ENCODE measurements at regions of chr17 and their contacts with region 1.

Region 1: DNA sequence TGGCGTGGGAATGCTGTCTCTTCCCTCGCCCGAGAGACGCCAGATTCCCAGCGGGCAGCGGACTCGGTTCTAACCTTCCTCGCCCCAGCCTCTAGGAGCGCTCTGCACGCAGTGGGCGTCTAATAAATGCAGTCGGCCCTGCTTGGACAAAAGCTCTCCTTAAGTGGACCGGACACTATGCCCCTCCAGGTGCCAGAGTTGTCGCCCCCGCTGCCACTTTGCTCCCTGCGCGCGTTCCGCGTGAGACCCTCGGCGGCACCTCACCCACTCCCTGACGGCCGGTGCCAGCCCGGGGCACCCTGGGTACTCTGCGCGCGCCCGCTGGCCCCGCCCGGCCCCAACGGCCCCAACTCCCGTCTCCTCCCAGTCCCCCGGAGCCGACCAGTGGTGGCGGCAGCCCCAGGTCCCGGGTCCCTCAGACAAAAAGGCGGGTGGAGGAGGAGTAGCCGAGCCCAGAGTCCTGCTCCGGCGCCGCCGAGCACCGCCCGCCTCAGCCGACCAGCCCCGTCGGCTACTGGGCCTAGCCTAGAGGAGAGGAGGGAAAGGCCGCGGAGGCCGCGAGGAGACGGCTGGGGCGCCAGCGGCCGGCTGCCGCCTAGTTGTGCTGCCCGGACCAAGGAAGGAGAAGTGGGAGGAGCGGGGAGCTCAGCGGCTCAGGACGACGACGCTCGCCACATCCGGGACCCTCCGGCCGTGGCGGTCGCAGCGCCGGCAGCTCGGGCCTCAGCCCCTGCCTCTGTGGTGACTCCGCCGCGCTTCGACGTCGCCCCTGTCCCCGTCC is 123.0 kb downstream of the GOSR1 start:
- DNase-seq: peak; percentile 73
- H3K4me3 Mint-ChIP-seq: peak overlapping the region; percentile 97
- H3K27ac Mint-ChIP-seq: no peak overlapping the region
- H3K4me1 Mint-ChIP-seq: peaks cover 16% of the 10 kb centered on the region
- H3K27me3 Mint-ChIP-seq: peaks cover 2% of the 10 kb centered on the region

Region 2: GRCh38 chr17:30477083-30477773 is 123.0 kb before region 1 on chr17 and contains the start of gene GOSR1:
- CTCF ChIA-PET with region 1: no interaction called
- intact Hi-C with region 1: loop called (anchors 10 kb)
- DNase-seq: peak; percentile 97
- H3K4me3 Mint-ChIP-seq: peak within 1 kb of the TSS; percentile 98
- H3K27ac Mint-ChIP-seq: peak within 1 kb of the TSS; percentile 97
- H3K4me1 Mint-ChIP-seq: peaks cover 36% of the 10 kb centered on the region
- H3K27me3 Mint-ChIP-seq: peaks cover 2% of the 10 kb centered on the region
- total RNA-seq, gene GOSR1: 33.9 to 37.3 TPM

Region 3: DNA sequence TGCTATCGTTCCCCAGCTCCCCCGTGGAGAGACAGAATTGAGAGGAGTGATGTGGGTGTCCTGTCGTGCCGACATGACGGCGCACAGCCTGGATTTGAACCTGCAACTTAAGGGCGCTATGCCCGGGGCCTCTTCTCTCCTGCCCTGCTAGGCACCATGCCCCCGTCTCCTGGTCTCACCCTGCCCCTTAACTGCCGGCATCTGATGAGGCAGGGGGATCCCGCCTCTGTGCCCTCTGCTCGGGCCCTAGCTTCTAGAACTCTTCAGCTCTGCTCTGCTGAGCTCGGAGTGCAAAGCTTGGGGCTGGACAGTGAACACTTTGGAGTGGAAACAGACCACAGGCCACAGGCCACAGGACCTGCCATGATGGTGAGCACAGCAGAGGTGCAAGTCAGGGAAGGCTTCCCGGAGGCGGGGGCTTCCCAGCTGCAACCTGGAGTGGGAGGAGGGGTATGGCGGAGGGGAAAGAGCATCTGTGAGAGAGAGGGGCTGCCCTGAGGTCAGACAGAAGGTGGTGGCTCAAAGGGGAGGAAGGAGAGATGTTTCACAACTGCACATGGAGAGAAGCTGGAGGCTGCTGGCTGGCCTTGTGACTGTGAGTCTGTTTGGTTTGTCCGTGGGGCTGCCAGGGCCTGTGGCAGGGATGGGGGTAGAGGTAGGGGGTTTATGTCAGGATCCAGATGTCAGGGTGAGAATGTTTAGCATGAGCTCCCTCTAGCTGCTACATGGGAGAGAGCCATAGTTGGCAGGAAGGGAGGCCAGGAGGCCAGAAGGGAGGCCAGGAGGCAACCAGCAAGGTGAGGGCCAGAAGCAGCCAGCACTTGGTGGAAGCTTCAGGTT is 116.4 kb after region 1 on chr17:
- CTCF ChIA-PET with region 1: interaction called, 3 read pairs
- intact Hi-C with region 1: loop called (anchors 10 kb)
- DNase-seq: peak; percentile 36
- H3K4me3 Mint-ChIP-seq: no peak overlapping the region
- H3K27ac Mint-ChIP-seq: no peak overlapping the region
- H3K4me1 Mint-ChIP-seq: peaks cover 11% of the 10 kb centered on the region
- H3K27me3 Mint-ChIP-seq: no peaks in the 10 kb centered on the region

Region 4: GRCh38 chr17:30780343-30780742 is 180.1 kb after region 1 on chr17:
- CTCF ChIA-PET with region 1: no interaction called
- intact Hi-C with region 1: no loop called
- DNase-seq: peak; percentile 57
- H3K4me3 Mint-ChIP-seq: no peak overlapping the region
- H3K27ac Mint-ChIP-seq: peak overlapping the region; percentile 80
- H3K4me1 Mint-ChIP-seq: peaks cover 18% of the 10 kb centered on the region
- H3K27me3 Mint-ChIP-seq: no peaks in the 10 kb centered on the region

Region 5: DNA sequence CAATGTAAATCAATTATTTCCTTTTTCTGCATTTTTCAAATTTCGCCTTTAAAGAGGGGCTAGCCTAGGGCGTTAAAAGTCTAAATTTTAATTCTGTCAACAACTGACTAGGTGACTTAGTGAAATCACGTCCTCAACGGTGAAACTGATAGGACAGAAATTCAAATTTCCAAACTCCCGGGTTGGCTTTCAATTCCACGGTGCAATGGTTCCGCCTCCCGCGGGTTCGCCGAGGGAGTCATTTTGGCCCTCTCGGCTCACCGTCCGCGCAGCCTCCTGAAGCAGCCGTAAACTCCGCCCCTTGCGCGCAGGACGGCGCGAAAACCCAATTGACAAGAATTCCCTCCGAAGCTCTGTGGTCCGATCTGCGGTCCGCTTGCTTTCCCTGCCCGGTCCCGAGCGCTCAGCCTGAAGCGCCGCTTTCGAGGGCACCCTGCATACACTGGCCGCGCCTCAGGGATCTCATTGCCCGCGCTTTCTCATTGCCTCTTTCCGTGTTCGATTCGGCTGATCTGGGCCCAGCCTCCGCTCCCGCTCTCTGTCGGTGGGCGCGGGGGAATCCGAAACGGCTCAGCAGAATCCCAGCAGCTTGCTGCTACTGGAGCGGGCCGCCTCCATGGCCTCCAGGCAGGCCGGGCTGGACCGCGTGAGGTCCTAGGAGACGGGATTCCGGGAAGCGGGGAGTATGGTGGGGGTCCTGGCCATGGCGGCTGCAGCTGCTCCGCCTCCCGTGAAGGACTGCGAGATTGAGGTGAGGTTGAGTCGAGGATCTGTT is 231.6 kb after region 1 on chr17 and contains the start of gene ATAD5:
- CTCF ChIA-PET with region 1: no interaction called
- intact Hi-C with region 1: loop called (anchors 2 kb)
- DNase-seq: peak; percentile 93
- H3K4me3 Mint-ChIP-seq: peak within 1 kb of the TSS; percentile 97
- H3K27ac Mint-ChIP-seq: peak within 1 kb of the TSS; percentile 90
- H3K4me1 Mint-ChIP-seq: peaks cover 23% of the 10 kb centered on the region
- H3K27me3 Mint-ChIP-seq: no peaks in the 10 kb centered on the region
- total RNA-seq, gene ATAD5: 33.3 to 33.5 TPM

Region 6: DNA sequence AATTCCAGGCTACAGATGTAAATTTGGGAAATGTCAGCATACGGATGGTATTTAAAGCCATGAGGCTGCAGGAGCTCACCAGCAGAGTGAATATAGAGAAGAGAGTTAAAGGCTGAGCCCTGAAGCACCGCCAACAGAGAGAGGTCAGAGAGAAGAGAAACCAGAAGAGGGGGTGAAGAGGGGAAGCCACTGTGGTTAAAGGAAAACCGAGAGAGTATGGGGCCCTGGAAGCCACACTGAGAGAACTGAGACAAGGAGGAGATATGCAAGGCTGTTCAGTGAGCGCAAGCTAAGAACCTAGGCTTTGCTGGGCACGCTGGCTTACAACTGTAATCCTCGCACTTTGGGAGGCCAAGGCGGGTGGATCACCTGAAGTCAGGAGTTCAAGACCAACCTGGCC is 1234.2 kb after region 1 on chr17:
- CTCF ChIA-PET with region 1: no interaction called
- intact Hi-C with region 1: no loop called
- DNase-seq: peak; percentile 7
- H3K4me3 Mint-ChIP-seq: no peak overlapping the region
- H3K27ac Mint-ChIP-seq: no peak overlapping the region
- H3K4me1 Mint-ChIP-seq: peaks cover 4% of the 10 kb centered on the region
- H3K27me3 Mint-ChIP-seq: no peaks in the 10 kb centered on the region